ENCODE measurements at regions of chr6 and their contacts with region 1.

Region 1: GRCh38 chr6:82836007-82836575 is 229.6 kb downstream of the UBE3D start:
- DNase-seq: no peak
- ATAC-seq: peak; percentile 78; the same call in 1 of the 2 replicates
- H3K4me3 ChIP-seq: peak overlapping the region; percentile 33 to 49
- H3K27ac ChIP-seq: peak overlapping the region; percentile 62
- H3K4me1 ChIP-seq: no peaks in the 10 kb centered on the region
- H3K27me3 ChIP-seq: no peaks in the 10 kb centered on the region
- CTCF ChIP-seq: no peak

Region 2: GRCh38 chr6:82277686-82278085 is 558.4 kb before region 1 on chr6:
- CTCF ChIA-PET with region 1: interaction called, 5 read pairs
- POLR2A ChIA-PET with region 1: interaction called, 10 read pairs
- in situ Hi-C with region 1: no loop called
- intact Hi-C with region 1: no loop called
- DNase-seq: no peak
- ATAC-seq: no peak
- H3K4me3 ChIP-seq: no peak overlapping the region
- H3K27ac ChIP-seq: no peak overlapping the region
- H3K4me1 ChIP-seq: no peaks in the 10 kb centered on the region
- H3K27me3 ChIP-seq: no peaks in the 10 kb centered on the region
- CTCF ChIP-seq: no peak